A673 (cell line): ENCODE measurements at regions of chr6 and their contacts with region 1.

Region 1: DNA sequence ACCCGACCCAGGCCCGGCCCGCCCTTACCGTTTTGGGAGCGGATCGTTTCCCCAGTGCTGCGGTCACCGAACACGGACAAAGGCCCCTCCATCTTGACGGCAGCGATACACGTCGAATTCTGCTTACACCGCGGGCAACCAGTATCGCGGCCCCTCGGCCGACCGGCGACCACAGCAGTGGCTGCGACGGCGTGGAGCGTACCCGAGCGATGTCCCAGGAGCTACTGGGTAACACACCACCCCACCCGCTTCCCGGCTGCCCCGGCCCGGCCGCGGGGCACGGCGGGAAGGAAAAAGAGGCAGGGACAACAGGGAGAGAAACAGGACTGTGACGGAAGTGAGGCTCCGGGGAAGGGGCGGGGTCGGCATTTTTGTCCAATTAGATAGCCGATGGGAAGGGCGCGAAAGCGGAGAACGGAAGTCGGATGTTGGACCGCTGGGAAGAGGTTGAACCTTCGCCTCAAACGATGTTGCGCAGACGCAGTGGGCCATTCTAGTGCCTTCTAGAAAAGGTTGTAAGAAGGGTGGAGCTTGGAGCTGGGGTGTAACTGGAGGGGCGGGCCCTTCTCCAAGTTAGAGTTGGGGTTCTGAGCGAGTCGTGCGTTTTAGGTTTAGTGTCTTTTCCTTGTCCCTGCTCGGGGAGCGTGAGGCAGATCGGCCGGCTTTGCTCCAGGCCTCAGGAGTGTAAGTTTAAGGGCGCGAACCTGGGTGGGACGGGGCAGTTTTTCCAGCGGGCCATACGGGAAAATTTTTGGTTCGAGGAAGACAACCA is at the start of gene TCP1:
- DNase-seq: peak; percentile 100
- H3K4me3 ChIP-seq: peak within 1 kb of the TSS; percentile 88
- H3K27ac ChIP-seq: peak within 1 kb of the TSS; percentile 91
- H3K4me1 ChIP-seq: peaks cover 23% of the 10 kb centered on the region
- H3K27me3 ChIP-seq: no peaks in the 10 kb centered on the region
- CTCF ChIP-seq: no peak
- total RNA-seq, gene TCP1: 505 and 528 TPM in 2 replicates

Region 2: GRCh38 chr6:158270389-158271127 is 1519.0 kb before region 1 on chr6:
- CTCF ChIA-PET with region 1: no interaction called
- POLR2A ChIA-PET with region 1: no interaction called
- intact Hi-C with region 1: no loop called
- DNase-seq: no peak
- H3K4me3 ChIP-seq: no peak overlapping the region
- H3K27ac ChIP-seq: no peak overlapping the region
- H3K4me1 ChIP-seq: no peaks in the 10 kb centered on the region
- H3K27me3 ChIP-seq: no peaks in the 10 kb centered on the region
- CTCF ChIP-seq: no peak

Region 3: GRCh38 chr6:159414711-159415110 is 374.9 kb before region 1 on chr6:
- CTCF ChIA-PET with region 1: no interaction called
- POLR2A ChIA-PET with region 1: no interaction called
- intact Hi-C with region 1: no loop called
- DNase-seq: no peak
- H3K4me3 ChIP-seq: no peak overlapping the region
- H3K27ac ChIP-seq: no peak overlapping the region
- H3K4me1 ChIP-seq: no peaks in the 10 kb centered on the region
- H3K27me3 ChIP-seq: no peaks in the 10 kb centered on the region
- CTCF ChIP-seq: no peak

Region 4: DNA sequence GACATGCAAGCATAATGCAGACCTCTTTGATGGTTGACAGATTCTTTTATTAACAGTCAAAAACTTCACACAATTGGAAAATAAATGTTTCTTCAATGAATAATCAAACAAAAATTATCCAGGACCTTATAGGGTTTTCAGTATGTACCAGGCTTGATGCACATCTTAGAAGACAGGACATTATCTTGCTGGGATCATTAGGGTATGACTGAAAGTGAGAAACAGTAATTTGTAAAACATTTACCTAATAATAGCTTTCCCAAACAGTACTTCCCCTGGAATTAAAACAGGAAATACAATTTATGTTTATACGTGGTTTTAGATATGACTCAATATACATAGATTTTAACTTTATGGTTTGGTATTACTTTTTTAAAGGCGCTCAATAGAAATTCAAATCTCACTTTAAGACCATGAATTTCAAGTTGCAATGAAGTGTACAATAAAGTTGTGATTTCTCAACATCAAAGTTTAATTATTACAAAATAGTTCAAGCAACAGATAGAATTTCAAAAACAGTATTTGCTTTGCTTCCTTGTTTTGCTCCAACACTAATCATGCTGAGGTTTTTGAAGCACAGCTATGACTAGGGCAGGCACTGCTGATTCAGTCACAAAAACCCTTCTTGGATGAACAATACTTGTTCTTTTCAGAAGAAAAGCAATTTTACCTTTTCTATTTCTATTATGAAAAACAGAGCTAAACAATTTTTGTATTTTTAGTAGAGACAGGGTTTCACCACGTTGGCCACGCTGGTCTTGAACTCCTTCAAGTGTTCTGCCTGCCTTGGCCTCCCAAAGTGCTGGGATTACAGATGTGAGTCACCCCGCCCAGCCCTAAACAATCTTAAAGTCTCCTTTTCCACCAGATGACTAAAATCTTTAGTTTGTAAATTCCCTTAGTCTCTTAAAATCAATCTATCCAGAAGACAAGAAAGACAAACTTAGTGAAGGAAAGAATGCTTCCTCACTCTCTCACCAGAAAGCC is 110.2 kb before region 1 on chr6:
- CTCF ChIA-PET with region 1: no interaction called
- POLR2A ChIA-PET with region 1: no interaction called
- intact Hi-C with region 1: no loop called
- DNase-seq: no peak
- H3K4me3 ChIP-seq: no peak overlapping the region
- H3K27ac ChIP-seq: no peak overlapping the region
- H3K4me1 ChIP-seq: no peaks in the 10 kb centered on the region
- H3K27me3 ChIP-seq: no peaks in the 10 kb centered on the region
- CTCF ChIP-seq: no peak

Region 5: GRCh38 chr6:159726918-159727716 is 62.4 kb before region 1 on chr6 and contains the start of gene WTAP:
- CTCF ChIA-PET with region 1: no interaction called
- POLR2A ChIA-PET with region 1: interaction called, 4 read pairs
- intact Hi-C with region 1: loop called (anchors 1 kb)
- DNase-seq: peak; percentile 97
- H3K4me3 ChIP-seq: peak within 1 kb of the TSS; percentile 93
- H3K27ac ChIP-seq: peak within 1 kb of the TSS; percentile 99
- H3K4me1 ChIP-seq: peaks cover 7% of the 10 kb centered on the region
- H3K27me3 ChIP-seq: no peaks in the 10 kb centered on the region
- CTCF ChIP-seq: no peak
- total RNA-seq, gene WTAP: 109 and 110 TPM in 2 replicates

Region 6: DNA sequence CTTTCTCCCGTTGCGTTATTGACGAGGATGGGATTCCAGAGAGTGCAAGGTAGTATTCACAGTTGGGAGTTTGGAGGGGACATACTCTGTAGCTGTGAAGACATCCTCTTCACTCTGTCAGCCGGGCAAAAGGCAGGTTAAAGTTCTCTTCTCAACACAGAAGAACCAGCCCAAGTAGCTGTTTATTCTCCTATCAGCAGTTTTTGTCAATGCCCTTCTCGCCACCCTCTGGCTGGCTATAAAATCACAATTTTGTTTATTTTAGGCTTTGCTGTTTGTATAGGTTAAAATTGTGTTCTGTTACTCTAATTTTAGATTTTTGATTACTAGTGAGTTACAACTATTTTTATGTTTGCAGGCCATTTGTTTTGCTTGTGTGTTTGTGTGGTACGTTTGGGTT is 63.3 kb after region 1 on chr6:
- CTCF ChIA-PET with region 1: no interaction called
- POLR2A ChIA-PET with region 1: no interaction called
- intact Hi-C with region 1: loop called (anchors 2 kb)
- DNase-seq: peak; percentile 23
- H3K4me3 ChIP-seq: no peak overlapping the region
- H3K27ac ChIP-seq: no peak overlapping the region
- H3K4me1 ChIP-seq: no peaks in the 10 kb centered on the region
- H3K27me3 ChIP-seq: peaks cover 13% of the 10 kb centered on the region
- CTCF ChIP-seq: peak; percentile 50